ENCODE measurements at regions of chr3 and their contacts with region 1.

Region 1: GRCh38 chr3:197224034-197224444 is 74.4 kb downstream of the DLG1 start:
- DNase-seq: peak; percentile 19
- ATAC-seq: peak; percentile 84
- H3K4me3 ChIP-seq: no peak overlapping the region
- H3K27ac ChIP-seq: no peak overlapping the region
- H3K4me1 ChIP-seq: peaks cover 3% of the 10 kb centered on the region; the same call in 1 of the 2 replicates
- H3K27me3 ChIP-seq: no peaks in the 10 kb centered on the region
- CTCF ChIP-seq: peak; percentile 40 to 66 (median 47); a peak in 5 of 6 replicates
- EP300 ChIP-seq: no peak
- POLR2A ChIP-seq: no peak
- RAD21 ChIP-seq: peak; percentile 86

Region 2: GRCh38 chr3:197203714-197204146 is 20.3 kb before region 1 on chr3:
- CTCF ChIA-PET with region 1: interaction called, 13 read pairs
- POLR2A ChIA-PET with region 1: no interaction called
- RAD21 ChIA-PET with region 1: interaction called, 6 read pairs
- SMC1A ChIA-PET with region 1: interaction called, 21 read pairs
- in situ Hi-C with region 1: no loop called
- intact Hi-C with region 1: no loop called
- DNase-seq: no peak
- ATAC-seq: peak; percentile 44
- H3K4me3 ChIP-seq: no peak overlapping the region
- H3K27ac ChIP-seq: no peak overlapping the region
- H3K4me1 ChIP-seq: no peaks in the 10 kb centered on the region
- H3K27me3 ChIP-seq: no peaks in the 10 kb centered on the region
- CTCF ChIP-seq: no peak
- EP300 ChIP-seq: no peak
- POLR2A ChIP-seq: no peak
- RAD21 ChIP-seq: no peak

Region 3: DNA sequence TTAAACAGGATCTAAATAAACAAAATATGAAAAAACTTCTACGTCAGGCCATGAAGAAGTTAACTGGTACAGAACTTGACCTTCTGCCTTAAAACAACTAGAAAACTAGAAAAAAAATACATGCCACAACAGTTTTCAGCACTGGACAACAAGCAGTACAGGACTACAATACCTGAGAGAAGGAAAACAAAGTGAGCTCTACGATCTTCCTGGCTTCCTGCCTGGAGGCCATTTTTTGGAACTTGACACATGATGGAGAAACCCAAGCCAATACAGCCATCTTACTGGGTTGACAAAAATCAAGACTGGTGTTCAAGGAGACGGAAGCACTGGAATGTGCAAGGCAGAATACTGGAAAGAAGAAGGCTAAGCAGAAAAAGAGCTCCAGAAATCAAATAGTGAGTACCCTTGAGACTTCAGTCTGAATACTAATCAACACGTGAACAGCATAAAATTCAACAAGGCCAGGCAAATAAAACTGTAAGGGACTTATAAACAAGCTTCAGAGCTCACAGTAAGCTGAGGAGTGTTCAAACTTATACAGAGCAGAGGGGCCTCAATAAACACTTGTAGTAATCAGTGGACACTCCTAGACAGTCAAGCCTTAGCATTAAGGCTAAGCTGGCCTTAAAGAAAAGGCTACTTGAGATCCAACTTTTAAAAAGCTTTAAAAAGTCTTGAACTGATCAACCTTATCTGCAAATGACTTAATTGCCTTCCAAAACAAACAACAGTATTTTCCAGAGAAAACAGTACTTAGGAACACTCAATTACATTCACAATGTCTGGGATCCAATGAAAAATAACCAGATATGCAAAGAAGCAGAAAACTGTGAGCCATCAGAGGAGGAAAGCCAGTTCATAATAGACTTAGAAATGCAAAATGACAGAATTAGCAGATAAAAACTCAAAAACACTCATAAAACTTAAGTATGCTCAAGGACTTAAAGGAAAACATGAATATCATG is 11.2 kb after region 1 on chr3:
- CTCF ChIA-PET with region 1: interaction called, 70 read pairs
- POLR2A ChIA-PET with region 1: interaction called, 3 read pairs
- RAD21 ChIA-PET with region 1: interaction called, 5 read pairs
- SMC1A ChIA-PET with region 1: interaction called, 63 read pairs
- in situ Hi-C with region 1: no loop called
- intact Hi-C with region 1: no loop called
- DNase-seq: no peak
- ATAC-seq: no peak
- H3K4me3 ChIP-seq: no peak overlapping the region
- H3K27ac ChIP-seq: no peak overlapping the region
- H3K4me1 ChIP-seq: peaks cover 25% of the 10 kb centered on the region
- H3K27me3 ChIP-seq: no peaks in the 10 kb centered on the region
- CTCF ChIP-seq: no peak
- EP300 ChIP-seq: no peak
- POLR2A ChIP-seq: no peak
- RAD21 ChIP-seq: no peak

Region 4: GRCh38 chr3:197249542-197249941 is 25.5 kb after region 1 on chr3:
- CTCF ChIA-PET with region 1: interaction called, 14 read pairs
- POLR2A ChIA-PET with region 1: no interaction called
- RAD21 ChIA-PET with region 1: no interaction called
- SMC1A ChIA-PET with region 1: interaction called, 6 read pairs
- in situ Hi-C with region 1: no loop called
- intact Hi-C with region 1: no loop called
- DNase-seq: no peak
- ATAC-seq: no peak
- H3K4me3 ChIP-seq: no peak overlapping the region
- H3K27ac ChIP-seq: no peak overlapping the region
- H3K4me1 ChIP-seq: no peaks in the 10 kb centered on the region
- H3K27me3 ChIP-seq: no peaks in the 10 kb centered on the region
- CTCF ChIP-seq: no peak
- EP300 ChIP-seq: no peak
- POLR2A ChIP-seq: no peak
- RAD21 ChIP-seq: no peak

Region 5: DNA sequence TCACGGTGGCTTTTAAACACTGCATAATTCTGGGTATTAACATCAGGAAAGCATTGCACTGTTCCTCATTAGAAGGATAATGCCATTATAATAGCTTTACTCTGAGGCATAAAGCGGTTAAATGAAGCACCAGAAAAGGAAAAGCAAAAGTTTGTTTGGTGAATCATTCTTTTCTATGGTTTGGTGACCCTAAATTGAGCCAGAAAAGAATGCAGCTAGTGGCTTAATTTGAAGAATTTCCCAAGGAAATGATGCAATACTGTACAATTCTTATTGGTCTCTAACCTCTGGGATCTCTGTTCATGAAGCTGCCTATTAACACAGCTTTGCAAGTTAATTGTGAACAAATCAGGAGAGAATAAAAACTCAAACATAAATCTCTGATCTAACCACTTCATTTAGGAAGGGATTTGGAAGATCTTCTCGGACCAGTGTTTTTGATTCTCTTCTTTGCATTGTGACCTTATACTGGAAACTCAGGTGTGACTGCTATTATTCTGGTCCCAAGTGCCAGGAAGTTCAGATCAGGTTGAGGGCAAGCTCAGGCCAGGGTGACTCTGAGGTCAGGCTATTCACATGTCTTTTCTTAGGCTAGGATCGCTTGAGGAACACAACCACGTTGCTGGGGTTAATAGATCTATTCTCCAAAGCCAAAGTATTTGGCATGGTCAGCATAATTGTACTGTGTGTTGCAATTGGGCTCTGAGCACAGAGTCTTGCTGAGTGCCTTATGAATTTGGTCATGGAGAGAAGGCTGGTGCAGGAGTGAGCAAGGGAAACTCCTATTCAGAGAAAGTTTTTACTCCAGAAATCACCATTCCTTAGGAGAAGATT is 85.7 kb after region 1 on chr3:
- CTCF ChIA-PET with region 1: no interaction called
- POLR2A ChIA-PET with region 1: no interaction called
- RAD21 ChIA-PET with region 1: no interaction called
- SMC1A ChIA-PET with region 1: no interaction called
- in situ Hi-C with region 1: no loop called
- intact Hi-C with region 1: no loop called
- DNase-seq: no peak
- ATAC-seq: peak; percentile 43
- H3K4me3 ChIP-seq: 0 out of 2 replicates have a peak overlapping the region, but pooled peaks have one; percentile 5
- H3K27ac ChIP-seq: no peak overlapping the region
- H3K4me1 ChIP-seq: peaks cover 19% of the 10 kb centered on the region
- H3K27me3 ChIP-seq: no peaks in the 10 kb centered on the region
- CTCF ChIP-seq: no peak
- EP300 ChIP-seq: no peak
- POLR2A ChIP-seq: no peak
- RAD21 ChIP-seq: no peak

Region 6: GRCh38 chr3:197456261-197457091 is 232.4 kb after region 1 on chr3:
- CTCF ChIA-PET with region 1: interaction called, 15 read pairs
- POLR2A ChIA-PET with region 1: no interaction called
- RAD21 ChIA-PET with region 1: interaction called, 17 read pairs
- SMC1A ChIA-PET with region 1: interaction called, 14 read pairs
- in situ Hi-C with region 1: no loop called
- intact Hi-C with region 1: loop called (anchors 2 kb)
- DNase-seq: no peak
- ATAC-seq: peak; percentile 85
- H3K4me3 ChIP-seq: peak overlapping the region; percentile 82
- H3K27ac ChIP-seq: peak overlapping the region; percentile 58
- H3K4me1 ChIP-seq: no peaks in the 10 kb centered on the region
- H3K27me3 ChIP-seq: no peaks in the 10 kb centered on the region
- CTCF ChIP-seq: no peak
- EP300 ChIP-seq: no peak
- POLR2A ChIP-seq: peak; percentile 79
- RAD21 ChIP-seq: no peak

Region 7: GRCh38 chr3:197511130-197511529 is 287.1 kb after region 1 on chr3:
- CTCF ChIA-PET with region 1: interaction called, 38 read pairs
- POLR2A ChIA-PET with region 1: no interaction called
- RAD21 ChIA-PET with region 1: no interaction called
- SMC1A ChIA-PET with region 1: interaction called, 7 read pairs
- in situ Hi-C with region 1: no loop called
- intact Hi-C with region 1: no loop called
- DNase-seq: no peak
- ATAC-seq: no peak
- H3K4me3 ChIP-seq: no peak overlapping the region
- H3K27ac ChIP-seq: no peak overlapping the region
- H3K4me1 ChIP-seq: no peaks in the 10 kb centered on the region
- H3K27me3 ChIP-seq: no peaks in the 10 kb centered on the region
- CTCF ChIP-seq: no peak
- EP300 ChIP-seq: no peak
- POLR2A ChIP-seq: no peak
- RAD21 ChIP-seq: no peak